Right ventricle myocardium superior (tissue), 1 donor: ENCODE measurements at regions of chr6 and their contacts with region 1.

Region 1: DNA sequence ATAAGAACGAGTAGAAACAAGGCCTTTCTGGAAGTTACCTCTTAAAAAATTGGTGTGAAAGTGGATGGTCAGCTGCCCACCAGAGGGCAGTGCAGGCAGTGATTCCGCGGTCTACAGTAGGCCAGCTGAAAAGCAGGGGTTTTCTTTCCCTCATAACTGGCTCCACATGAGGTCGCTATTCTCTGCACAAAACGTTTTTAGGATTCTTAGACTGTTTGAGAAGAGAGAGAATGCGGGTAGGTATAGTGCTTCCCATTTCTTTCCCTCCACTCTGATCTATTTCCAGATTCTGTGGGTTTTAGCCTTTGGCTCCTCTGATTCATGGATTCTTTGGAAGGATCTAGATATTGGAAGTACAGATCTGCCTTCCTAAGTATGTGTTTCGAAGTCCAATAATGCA is 14.2 kb downstream of the FIG4 start:
- DNase-seq: peak; percentile 83
- ATAC-seq: peak; percentile 95

Region 2: DNA sequence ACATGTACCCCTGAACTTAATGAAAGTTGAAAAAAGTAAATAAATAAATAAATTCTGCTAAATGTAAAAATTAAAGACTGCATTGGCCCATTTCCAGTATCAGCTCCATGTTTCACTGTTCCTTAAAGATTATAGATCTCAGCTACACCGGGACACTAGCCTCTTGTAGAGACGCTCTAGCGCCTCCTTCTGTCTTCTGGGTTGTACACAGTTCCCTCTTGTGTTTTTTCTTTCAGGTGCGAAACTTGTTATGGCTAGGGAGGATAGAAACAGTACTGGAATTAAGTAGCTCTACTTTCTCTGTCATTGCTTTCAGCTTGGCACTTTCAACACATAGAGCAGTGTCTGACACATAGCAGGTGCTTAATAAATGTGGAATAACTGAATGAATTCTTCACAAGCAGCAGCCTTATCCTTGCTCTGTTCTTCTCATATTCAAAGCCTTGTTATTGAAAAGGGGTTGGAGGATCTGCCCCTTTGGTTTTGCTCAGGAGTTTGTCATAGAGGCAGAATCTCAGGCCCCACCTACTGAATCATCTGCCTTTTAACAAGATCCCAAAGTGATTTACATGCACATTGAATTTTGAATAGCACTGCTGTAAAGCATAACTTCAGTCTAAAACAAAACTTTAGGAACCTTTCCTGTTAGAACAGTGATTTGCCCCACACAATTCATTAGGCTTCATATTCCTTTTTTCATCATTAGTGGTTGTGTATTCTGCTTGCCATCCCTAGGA is 78.2 kb after region 1 on chr6:
- intact Hi-C with region 1: loop called (anchors 5 kb)
- DNase-seq: no peak
- ATAC-seq: no peak

Region 3: DNA sequence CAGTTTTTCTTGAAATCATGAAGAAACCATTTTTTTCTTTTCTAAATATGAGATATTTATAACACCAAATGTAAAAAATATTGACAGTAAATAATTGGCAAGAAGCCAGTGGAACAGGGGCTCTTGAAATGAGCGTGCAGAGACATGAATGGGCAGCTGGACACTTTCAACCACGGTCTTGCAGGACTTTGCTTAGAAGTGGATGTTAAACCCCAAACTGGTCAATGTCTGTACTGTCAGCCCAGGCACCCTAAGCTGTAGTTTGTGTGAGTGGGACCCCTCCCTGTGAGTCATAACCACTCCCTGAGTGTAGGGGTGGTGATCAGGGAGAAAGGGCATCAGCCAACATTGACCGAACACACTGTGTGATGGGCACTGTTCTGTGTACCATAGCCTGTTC is 94.4 kb after region 1 on chr6:
- intact Hi-C with region 1: no loop called
- DNase-seq: no peak
- ATAC-seq: no peak

Region 4: DNA sequence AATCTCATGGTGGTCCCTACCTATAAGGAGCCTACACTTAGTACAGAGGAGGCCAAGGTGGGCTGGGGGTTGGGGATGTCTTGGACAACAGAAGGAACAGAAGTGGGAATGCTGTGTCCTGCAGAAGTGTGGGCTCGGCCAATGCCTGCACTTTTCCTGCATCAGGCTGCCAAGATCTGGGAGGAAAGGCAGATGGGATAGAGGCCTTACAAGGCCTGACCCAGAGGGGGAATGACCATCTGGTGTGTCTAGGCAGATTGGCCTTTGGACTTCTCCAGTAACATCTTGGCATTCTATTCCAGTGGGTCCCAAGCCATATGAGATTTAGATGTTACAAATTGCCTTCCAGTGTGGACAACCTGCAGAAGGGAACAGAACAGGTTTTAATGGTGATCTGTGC is 148.2 kb after region 1 on chr6:
- intact Hi-C with region 1: no loop called
- DNase-seq: no peak
- ATAC-seq: no peak

Region 5: DNA sequence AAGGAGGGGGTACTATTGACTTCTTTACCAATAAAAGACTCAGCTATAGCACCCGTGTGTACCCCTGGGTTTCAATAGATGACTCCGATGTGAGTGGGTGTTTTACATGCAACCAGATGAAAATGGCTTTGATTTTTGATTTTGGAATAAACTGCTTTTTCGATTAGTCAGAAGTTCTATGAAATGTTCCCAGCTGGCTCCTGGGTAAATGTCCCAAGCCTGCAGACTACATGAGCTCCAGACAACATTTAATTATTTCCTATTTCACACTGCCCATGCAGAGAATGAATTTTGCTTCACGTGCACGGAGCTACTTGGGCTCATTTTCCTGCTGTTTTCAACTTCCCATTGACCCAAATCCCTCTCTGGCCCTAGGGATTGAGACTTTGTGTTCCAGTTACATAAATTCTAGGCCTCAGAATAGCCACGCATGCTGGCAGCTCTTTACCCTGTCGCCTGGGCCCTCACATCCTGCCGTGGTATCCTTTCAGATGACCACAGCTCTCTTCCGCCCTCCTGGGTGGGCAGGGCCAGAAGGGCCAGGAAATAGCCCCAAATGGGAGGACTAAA is 332.6 kb after region 1 on chr6:
- intact Hi-C with region 1: loop called (anchors 2 kb)
- DNase-seq: no peak
- ATAC-seq: no peak

Region 6: DNA sequence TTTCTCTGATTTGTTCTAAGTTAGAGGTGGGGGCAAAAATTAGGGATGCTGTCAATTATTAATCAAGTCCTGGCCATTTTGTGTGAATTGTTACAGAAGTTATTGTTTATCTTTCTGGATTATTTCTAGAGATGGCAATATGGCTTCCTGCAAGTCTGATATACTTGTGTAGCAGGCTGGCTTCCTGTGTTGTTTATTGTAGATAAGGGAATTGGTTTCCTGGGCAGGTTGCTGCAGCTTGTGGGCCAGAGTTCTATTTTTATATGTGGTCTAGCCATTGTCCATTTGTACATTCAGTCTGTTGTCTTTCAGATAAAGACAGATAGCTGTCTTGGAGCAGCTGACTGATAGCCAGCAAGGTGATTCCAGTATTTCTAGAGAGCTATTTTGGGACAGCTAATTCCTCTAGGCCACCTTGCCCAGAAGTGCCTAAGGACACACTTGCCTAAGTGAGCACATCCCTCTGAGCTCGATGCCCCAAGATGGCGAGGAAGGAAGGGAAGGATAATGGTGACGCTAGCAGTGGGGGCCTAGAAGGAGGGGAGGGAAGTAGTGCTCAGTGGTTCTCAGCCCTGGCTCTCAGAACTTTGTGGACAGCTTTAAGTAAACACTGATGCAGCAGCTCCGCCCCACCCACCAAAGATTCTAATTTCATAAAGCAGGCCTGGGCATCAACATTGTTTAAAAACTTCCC is 684.6 kb after region 1 on chr6:
- intact Hi-C with region 1: loop called (anchors 10 kb)
- DNase-seq: no peak
- ATAC-seq: peak; percentile 28